ENCODE measurements at regions of chr7 and their contacts with region 1.

Region 1: GRCh38 chr7:122305475-122306319 is 1.1 kb upstream of the FEZF1 start:
- DNase-seq: peak in 1 of 2 experiments; percentile 39
- H3K4me3 ChIP-seq: peak overlapping the region; percentile 67
- H3K27ac ChIP-seq: no peak overlapping the region
- H3K4me1 ChIP-seq: no peaks in the 10 kb centered on the region
- H3K27me3 ChIP-seq: 0 out of 2 replicates have a peak, but pooled peaks cover 2% of the 10 kb centered on the region
- CTCF ChIP-seq: no peak

Region 2: DNA sequence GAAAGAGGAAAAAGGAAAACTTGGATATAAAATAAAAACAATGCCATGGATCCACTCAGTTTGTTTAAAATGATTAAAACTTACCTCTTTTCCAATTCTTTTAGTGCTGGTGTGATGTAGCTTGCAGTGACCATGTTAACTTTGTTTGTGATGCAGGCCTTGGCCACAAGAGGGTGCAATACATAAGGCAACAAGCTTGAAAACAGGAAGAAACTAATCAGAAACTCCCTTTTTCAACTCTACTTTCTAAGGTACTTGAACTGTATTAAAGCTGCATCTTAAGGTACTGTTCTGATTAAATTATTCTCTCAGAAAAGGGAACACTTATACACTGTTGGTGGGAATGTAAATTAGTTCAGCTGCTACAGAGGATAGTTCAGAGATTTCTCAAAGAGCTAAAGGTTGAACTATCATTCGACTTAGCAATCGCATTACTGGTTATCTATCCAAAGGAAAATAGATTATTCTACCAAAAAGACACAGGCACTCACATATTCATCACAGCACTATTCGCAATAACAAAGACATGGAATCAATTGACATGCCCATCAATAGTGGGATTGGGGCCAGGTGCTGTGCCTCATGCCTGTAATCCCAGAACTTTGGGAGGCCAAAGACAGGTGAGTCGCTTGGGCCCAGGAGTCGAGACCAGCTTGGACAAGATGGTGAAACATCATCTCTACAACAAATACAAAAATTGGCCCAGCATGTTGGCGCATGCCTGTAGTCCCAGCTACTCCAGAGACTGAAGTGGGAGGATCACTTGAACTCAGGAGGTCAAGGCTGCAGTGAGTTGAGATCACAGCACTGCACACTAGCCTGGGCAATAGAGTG is 212.5 kb before region 1 on chr7:
- CTCF ChIA-PET with region 1: no interaction called
- POLR2A ChIA-PET with region 1: no interaction called
- intact Hi-C with region 1: loop called (anchors 5 kb)
- DNase-seq: peak; percentile 42 to 62
- H3K4me3 ChIP-seq: no peak overlapping the region
- H3K27ac ChIP-seq: no peak overlapping the region
- H3K4me1 ChIP-seq: no peaks in the 10 kb centered on the region
- H3K27me3 ChIP-seq: no peaks in the 10 kb centered on the region
- CTCF ChIP-seq: peak; percentile 83

Region 3: GRCh38 chr7:122329145-122329802 is 23.6 kb after region 1 on chr7:
- CTCF ChIA-PET with region 1: no interaction called
- POLR2A ChIA-PET with region 1: no interaction called
- intact Hi-C with region 1: no loop called
- DNase-seq: no peak
- H3K4me3 ChIP-seq: no peak overlapping the region
- H3K27ac ChIP-seq: no peak overlapping the region
- H3K4me1 ChIP-seq: no peaks in the 10 kb centered on the region
- H3K27me3 ChIP-seq: no peaks in the 10 kb centered on the region
- CTCF ChIP-seq: no peak

Measured in PC-9 (cell line).